ENCODE measurements at regions of chr6 and their contacts with region 1.

Region 1: GRCh38 chr6:117555882-117556498 is 46.3 kb downstream of the GOPC start:
- DNase-seq: no peak
- H3K4me3 ChIP-seq: no peak overlapping the region
- CTCF ChIP-seq: peak; percentile 46

Region 2: DNA sequence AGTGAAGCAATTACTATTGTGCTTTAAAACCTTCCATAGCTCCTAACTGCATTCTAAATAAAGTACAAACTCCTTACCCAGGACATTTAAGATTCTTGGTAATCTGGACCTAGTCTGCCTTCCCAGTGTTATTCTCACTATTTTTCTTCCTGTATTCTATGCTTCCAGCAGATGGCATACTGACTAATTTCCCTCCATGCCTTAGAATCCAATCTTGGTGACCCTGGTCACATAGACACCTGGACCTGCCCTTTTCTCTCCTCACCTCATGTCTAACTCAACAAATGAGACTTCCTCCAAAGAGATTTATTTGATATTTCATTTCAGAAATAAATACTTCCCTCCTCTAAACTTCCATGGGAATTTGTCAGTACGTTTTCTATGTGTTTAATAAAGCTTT is 156.1 kb before region 1 on chr6:
- CTCF ChIA-PET with region 1: interaction called, 23 read pairs
- POLR2A ChIA-PET with region 1: no interaction called
- DNase-seq: no peak
- H3K4me3 ChIP-seq: no peak overlapping the region
- CTCF ChIP-seq: peak; percentile 10

Region 3: GRCh38 chr6:117440558-117441525 is 115.1 kb before region 1 on chr6:
- CTCF ChIA-PET with region 1: interaction called, 14 read pairs
- POLR2A ChIA-PET with region 1: no interaction called
- DNase-seq: peak; percentile 96
- H3K4me3 ChIP-seq: no peak overlapping the region
- CTCF ChIP-seq: no peak

Region 4: DNA sequence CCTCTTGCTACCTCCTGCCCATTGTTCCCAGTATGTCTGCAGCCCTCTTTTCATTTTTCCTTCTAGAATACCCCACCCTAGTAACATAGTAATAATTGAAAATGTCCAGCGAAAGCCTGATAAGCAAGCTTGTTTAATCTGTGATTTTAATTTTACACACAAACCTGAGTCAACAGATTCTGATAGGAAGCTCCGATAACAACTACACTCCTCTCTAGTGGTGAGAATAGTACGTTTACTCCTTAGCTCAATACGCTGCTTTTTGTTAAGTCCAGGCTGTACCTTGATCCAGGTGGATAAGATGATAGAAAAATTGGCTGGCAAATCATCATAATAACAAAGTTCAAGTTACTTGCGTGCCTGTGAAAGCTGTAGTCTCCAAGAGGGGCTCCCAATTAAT is 99.0 kb before region 1 on chr6:
- CTCF ChIA-PET with region 1: interaction called, 273 read pairs
- POLR2A ChIA-PET with region 1: no interaction called
- DNase-seq: no peak
- H3K4me3 ChIP-seq: no peak overlapping the region
- CTCF ChIP-seq: no peak

Region 5: GRCh38 chr6:117568831-117569410 is 12.9 kb after region 1 on chr6:
- CTCF ChIA-PET with region 1: interaction called, 35 read pairs
- POLR2A ChIA-PET with region 1: no interaction called
- DNase-seq: no peak
- H3K4me3 ChIP-seq: no peak overlapping the region
- CTCF ChIP-seq: no peak